Activated T-helper 2 cell treated with anti-CD3 and anti-CD28 coated beads, Interferon-gamma antibody, Interleukin-2, Interleukin-4, amounts not matched to agents 10 μg/mL and 5 μg/mL and 100 μg/mL, durations not matched to agents 14 hours and 24 hours and 36 hours (primary cell): ENCODE measurements at regions of chr14 and their contacts with region 1.

Region 1: GRCh38 chr14:98173305-98173704 is 1098.7 kb downstream of the BCL11B start:
- DNase-seq: peak; percentile 45
- H3K4me3 Mint-ChIP-seq: peak overlapping the region; percentile 11
- H3K27ac Mint-ChIP-seq: peak overlapping the region; percentile 90
- H3K4me1 Mint-ChIP-seq: peaks cover 92% of the 10 kb centered on the region
- H3K27me3 Mint-ChIP-seq: no peaks in the 10 kb centered on the region

Region 2: GRCh38 chr14:97380539-97380941 is 792.8 kb before region 1 on chr14:
- intact Hi-C with region 1: loop called (anchors 10 kb)
- DNase-seq: peak; percentile 38
- H3K4me3 Mint-ChIP-seq: no peak overlapping the region
- H3K27ac Mint-ChIP-seq: peak overlapping the region; percentile 76
- H3K4me1 Mint-ChIP-seq: peaks cover 65% of the 10 kb centered on the region
- H3K27me3 Mint-ChIP-seq: no peaks in the 10 kb centered on the region

Region 3: DNA sequence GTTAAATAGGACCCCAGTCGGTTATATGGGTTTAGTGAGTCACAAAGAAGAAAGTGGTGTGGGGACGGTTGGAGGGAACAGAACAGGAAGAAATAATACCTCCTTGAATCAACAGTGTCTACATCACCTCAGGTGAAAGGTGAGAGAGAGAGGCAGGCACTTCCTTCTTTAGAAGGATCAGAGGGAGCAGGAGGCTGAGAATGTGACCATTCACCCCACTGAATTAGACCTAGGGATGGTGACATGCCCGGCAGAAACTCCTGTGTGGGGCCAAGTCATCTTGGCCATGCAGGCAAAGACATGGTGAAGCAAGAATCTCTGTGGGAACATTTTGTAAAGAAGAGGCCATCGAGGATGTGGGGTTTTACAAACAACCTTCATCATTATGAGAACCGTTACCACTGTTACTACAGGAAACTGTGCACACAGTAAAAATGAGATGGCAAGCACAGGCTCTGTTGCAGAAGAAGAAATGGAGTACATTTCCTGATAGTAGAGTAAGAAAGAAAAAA is 179.2 kb before region 1 on chr14:
- intact Hi-C with region 1: loop called (anchors 2 kb)
- DNase-seq: peak; percentile 25
- H3K4me3 Mint-ChIP-seq: no peak overlapping the region
- H3K27ac Mint-ChIP-seq: peak overlapping the region; percentile 85
- H3K4me1 Mint-ChIP-seq: peaks cover 36% of the 10 kb centered on the region
- H3K27me3 Mint-ChIP-seq: no peaks in the 10 kb centered on the region

Region 4: DNA sequence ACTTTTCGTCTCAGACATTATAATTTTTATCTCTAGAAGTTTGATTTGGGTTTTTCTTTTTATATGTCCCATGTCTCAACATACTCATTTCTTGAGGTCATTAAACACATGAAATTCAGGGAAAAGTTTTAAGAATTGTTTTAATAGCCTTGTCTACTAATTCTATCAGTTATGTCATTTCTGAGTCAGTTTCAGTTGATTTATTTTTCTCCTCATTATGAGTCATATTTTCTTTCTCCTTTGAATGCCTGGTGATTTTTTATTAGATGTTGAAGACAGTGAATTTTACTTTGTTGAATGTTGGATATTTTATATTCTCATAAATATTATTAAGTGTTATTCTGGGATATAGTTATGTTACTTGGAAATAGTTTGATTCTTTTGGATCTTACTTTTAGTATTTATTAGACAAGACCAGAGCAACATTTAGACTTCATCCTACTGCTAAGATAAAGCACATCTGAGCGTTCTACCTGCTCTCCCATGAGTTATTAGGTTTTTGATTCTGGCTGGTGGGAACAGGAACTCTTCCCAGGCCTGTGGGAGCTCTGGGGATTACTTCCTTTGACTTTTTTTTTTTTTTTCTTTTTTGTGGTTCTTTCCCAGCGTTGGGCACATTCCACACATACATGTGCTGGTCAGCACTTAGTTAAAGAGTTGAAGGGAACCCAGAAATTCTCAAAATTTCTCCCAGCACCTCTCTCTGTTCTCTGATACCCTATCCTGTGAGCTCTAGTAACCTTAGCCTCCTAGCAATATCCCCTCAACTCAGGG is 59.0 kb before region 1 on chr14:
- intact Hi-C with region 1: no loop called
- DNase-seq: no peak
- H3K4me3 Mint-ChIP-seq: no peak overlapping the region
- H3K27ac Mint-ChIP-seq: no peak overlapping the region
- H3K4me1 Mint-ChIP-seq: peaks cover 13% of the 10 kb centered on the region
- H3K27me3 Mint-ChIP-seq: no peaks in the 10 kb centered on the region

Region 5: GRCh38 chr14:98138666-98139065 is 34.6 kb before region 1 on chr14:
- intact Hi-C with region 1: loop called (anchors 2 kb)
- DNase-seq: peak; percentile 62
- H3K4me3 Mint-ChIP-seq: peak overlapping the region; percentile 53
- H3K27ac Mint-ChIP-seq: peak overlapping the region; percentile 61
- H3K4me1 Mint-ChIP-seq: peaks cover 76% of the 10 kb centered on the region
- H3K27me3 Mint-ChIP-seq: no peaks in the 10 kb centered on the region

Region 6: GRCh38 chr14:98210045-98210672 is 36.9 kb after region 1 on chr14:
- intact Hi-C with region 1: no loop called
- DNase-seq: peak; percentile 28
- H3K4me3 Mint-ChIP-seq: peak overlapping the region; percentile 56
- H3K27ac Mint-ChIP-seq: peak overlapping the region; percentile 66
- H3K4me1 Mint-ChIP-seq: peaks cover 65% of the 10 kb centered on the region
- H3K27me3 Mint-ChIP-seq: no peaks in the 10 kb centered on the region

Region 7: DNA sequence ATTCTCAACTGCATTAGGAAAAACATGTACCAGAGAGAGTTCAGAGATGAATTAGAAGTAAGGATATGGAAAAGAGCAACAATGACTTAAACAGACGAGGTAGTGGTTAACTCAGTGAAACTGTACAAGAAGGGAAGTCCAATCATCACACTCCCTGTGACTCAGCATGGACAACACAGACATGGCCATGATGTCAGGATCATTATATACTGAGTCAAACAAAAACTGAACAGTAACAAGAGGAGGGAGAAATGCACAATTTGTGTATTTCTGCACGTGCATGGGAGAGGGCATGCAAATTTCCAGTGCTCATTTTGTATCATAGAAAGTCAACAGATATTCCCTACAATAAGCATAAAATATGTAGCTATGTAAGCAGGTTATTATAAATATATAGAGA is 60.9 kb after region 1 on chr14:
- intact Hi-C with region 1: loop called (anchors 1 kb)
- DNase-seq: no peak
- H3K4me3 Mint-ChIP-seq: no peak overlapping the region
- H3K27ac Mint-ChIP-seq: no peak overlapping the region
- H3K4me1 Mint-ChIP-seq: peaks cover 43% of the 10 kb centered on the region
- H3K27me3 Mint-ChIP-seq: no peaks in the 10 kb centered on the region

Region 8: GRCh38 chr14:98593361-98593761 is 420.1 kb after region 1 on chr14:
- intact Hi-C with region 1: no loop called
- DNase-seq: no peak
- H3K4me3 Mint-ChIP-seq: no peak overlapping the region
- H3K27ac Mint-ChIP-seq: no peak overlapping the region
- H3K4me1 Mint-ChIP-seq: no peaks in the 10 kb centered on the region
- H3K27me3 Mint-ChIP-seq: no peaks in the 10 kb centered on the region

Region 9: DNA sequence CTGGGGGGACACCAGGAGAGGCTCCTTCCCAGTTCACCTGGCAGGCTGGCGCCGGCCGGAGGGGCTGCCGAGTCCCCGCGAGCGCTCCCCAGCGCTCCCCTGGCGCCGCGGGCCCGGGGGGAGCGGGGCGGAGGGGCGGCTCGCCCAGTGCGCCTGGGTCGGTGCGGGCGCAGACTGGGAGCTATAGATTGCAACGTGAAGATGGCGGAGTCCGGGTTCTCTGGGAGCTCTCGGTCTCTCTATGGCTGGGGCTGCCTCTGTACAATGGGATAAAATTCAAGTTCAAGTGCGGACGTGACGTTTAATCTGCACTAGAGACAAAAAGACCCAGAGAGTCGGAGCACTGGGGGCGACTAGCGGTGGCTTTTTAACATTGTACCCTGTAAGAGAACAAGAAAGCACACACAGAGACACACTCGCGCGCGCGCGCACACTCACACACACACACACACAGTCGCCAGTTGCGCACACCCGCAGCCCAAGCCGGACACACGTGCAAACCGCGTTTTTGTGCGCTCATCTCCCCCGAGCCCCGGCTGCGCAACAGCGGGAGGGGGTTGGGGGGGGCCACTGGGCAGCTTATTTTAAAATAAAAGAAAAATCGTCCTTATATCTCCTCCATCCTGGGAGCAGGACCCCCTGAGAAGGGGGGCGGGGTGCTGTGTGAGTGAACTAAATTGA is 1098.8 kb after region 1 on chr14 and contains the start of gene BCL11B:
- intact Hi-C with region 1: loop called (anchors 2 kb)
- DNase-seq: peak; percentile 88
- H3K4me3 Mint-ChIP-seq: peak within 1 kb of the TSS; percentile 93
- H3K27ac Mint-ChIP-seq: peak within 1 kb of the TSS; percentile 94
- H3K4me1 Mint-ChIP-seq: peaks cover 37% of the 10 kb centered on the region
- H3K27me3 Mint-ChIP-seq: peaks cover 10% of the 10 kb centered on the region
- total RNA-seq, gene BCL11B: 34.1 and 34.9 TPM in 2 replicates